ENCODE measurements at regions of chr4 and their contacts with region 1.

Region 1: DNA sequence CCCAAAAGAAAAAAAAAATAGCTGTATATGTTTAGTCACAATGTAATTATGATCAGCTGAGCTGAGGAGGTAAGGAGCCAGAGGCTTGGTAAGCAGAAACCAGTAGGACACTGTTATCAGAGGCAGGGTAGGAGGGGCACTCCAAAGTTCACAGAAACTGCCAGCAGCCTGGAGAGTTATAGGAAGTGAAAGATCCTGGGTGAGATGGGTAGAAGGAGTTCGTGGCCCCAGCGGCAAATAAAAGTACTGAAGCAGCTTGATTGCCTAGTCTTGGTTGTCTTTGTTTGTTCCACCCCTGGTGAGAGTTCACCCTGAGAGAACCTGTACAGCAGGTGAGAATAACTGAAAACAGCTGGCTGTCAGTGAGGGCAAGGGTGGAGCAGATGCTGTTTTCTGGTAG is 340.8 kb downstream of the ADGRL3 start:
- DNase-seq: no peak
- H3K4me3 ChIP-seq: no peak overlapping the region
- H3K27ac ChIP-seq: no peak overlapping the region
- H3K4me1 ChIP-seq: no peaks in the 10 kb centered on the region
- H3K27me3 ChIP-seq: no peaks in the 10 kb centered on the region
- CTCF ChIP-seq: no peak

Region 2: DNA sequence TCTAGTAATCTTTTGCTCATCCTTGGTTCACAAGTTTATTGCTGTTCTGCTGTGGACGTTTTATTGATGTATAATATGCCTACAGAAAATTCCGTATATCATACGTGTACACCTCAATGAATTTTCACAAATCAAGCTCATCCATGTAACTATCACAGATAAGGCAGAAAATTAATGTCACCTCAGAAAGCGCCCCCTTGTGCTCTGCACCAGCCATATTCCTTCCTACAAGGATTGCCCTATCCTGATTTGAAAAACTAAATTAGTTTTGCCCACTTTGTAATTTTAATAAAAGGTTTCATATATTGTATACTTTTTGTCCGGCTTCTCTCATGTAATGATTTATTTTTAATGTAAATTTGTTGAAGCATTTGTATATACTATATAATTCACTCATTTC is 49.9 kb after region 1 on chr4:
- CTCF ChIA-PET with region 1: interaction called, 8 read pairs
- dilution Hi-C with region 1: no loop called
- in situ Hi-C with region 1: no loop called
- intact Hi-C with region 1: loop called (anchors 1 kb)
- DNase-seq: no peak
- H3K4me3 ChIP-seq: no peak overlapping the region
- H3K27ac ChIP-seq: no peak overlapping the region
- H3K4me1 ChIP-seq: no peaks in the 10 kb centered on the region
- H3K27me3 ChIP-seq: no peaks in the 10 kb centered on the region
- CTCF ChIP-seq: peak; percentile 24 to 34